ENCODE measurements at regions of chr11 and their contacts with region 1.

Region 1: DNA sequence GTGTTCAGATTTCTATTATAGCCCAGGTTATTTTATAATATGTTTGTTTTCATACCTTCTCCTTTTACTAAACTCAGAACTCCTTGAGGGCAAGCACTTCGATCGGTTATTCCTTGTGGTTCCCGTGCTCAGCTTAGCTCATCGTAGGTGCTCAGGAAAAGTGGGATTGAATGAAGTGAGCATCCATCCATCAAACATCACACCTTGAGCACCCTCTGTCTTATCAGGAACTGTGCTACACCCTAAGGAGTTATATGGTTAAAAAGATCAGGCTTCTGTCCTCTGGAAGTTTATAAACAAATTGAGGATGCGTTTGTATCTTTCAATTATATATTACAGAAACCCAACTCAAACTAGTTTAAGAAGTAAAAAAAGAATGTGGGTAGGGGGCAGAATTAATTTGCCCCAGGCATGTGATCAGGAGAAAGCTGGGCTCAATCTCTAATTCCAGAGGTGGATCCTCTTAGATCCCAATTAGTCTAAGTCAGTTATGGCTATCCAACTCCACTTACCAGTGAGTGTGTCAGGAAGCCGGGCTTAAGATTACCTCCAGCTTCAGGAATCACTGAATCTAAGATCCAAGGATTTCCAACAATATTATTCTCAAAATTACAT is 59.9 kb upstream of the RRAS2 start:
- DNase-seq: no peak
- H3K4me3 ChIP-seq: no peak overlapping the region
- H3K4me3 Mint-ChIP-seq: no peak overlapping the region
- H3K27ac ChIP-seq: no peak overlapping the region
- H3K27ac Mint-ChIP-seq: no peak overlapping the region
- H3K4me1 ChIP-seq: peaks cover 29% of the 10 kb centered on the region
- H3K4me1 Mint-ChIP-seq: peaks cover 19 to 33% (median 20%) of the 10 kb centered on the region in 4 donors
- H3K27me3 ChIP-seq: no peaks in the 10 kb centered on the region
- H3K27me3 Mint-ChIP-seq: no peaks in the 10 kb centered on the region

Region 2: DNA sequence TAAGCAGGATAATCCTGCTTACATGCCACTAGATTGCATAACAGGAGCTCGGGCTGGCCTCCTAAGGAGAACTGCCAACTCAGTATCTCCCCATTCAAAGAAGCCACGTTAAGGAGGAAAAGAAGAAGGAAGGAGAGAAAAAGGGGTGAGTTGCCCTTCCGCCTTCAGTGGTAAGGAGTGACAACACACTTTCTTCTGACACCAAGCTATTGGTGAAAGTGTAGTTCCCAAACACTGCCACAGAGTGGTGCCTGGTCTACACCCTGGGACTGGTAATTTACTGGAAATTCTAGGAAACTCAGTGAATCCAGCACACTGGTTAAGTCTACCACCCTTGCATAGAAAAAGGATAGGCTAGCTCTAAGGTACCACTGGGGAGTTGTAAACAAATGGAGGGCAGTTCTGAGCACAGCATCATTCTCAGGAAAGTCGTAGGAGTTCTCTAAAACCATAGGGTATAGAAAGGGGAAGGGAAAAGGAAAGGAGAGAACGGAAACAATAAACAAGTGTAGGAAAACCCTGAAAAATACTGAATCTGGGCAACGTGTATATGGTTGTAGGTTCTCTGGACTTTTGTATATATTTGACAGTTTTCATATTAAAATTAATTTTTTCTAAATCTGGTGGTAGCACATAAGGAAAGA is 118.1 kb before region 1 on chr11:
- CTCF ChIA-PET with region 1: interaction called, 10 read pairs
- POLR2A ChIA-PET with region 1: interaction called, 3 read pairs
- intact Hi-C with region 1: no loop called
- DNase-seq: peak in 4 of 5 donors; percentile 36 to 47 (median 44)
- H3K4me3 ChIP-seq: no peak overlapping the region
- H3K4me3 Mint-ChIP-seq: no peak overlapping the region
- H3K27ac ChIP-seq: no peak overlapping the region
- H3K27ac Mint-ChIP-seq: no peak overlapping the region
- H3K4me1 ChIP-seq: peaks cover 7% of the 10 kb centered on the region
- H3K4me1 Mint-ChIP-seq: peaks cover 0 to 10% (median 4%) of the 10 kb centered on the region in 4 donors
- H3K27me3 ChIP-seq: no peaks in the 10 kb centered on the region
- H3K27me3 Mint-ChIP-seq: no peaks in the 10 kb centered on the region

Region 3: DNA sequence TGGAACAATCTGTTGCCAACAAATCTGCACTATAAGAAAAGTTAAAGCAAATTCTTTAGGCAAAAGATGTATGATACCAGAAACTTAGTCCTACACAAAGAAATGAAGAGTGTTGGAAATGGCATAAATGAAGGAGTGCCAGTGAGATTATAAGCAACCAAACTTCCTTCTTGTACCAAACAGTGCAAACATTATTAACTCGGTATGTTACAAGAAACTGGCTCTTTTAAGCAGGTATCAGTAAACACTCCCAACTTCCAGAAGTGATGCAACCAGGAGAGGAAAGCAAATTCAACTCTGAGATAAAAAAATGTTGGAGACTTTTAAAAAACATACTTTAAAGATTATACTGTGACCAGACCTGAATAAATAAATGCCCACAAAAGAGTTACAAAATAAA is 52.2 kb after region 1 on chr11:
- CTCF ChIA-PET with region 1: no interaction called
- POLR2A ChIA-PET with region 1: no interaction called
- intact Hi-C with region 1: no loop called
- DNase-seq: no peak
- H3K4me3 ChIP-seq: no peak overlapping the region
- H3K4me3 Mint-ChIP-seq: peak overlapping the region in 1 of 8 donors; percentile 54
- H3K27ac ChIP-seq: no peak overlapping the region
- H3K27ac Mint-ChIP-seq: peak overlapping the region in 5 of 7 donors; percentile 25 to 77 (median 67)
- H3K4me1 ChIP-seq: peaks cover 19% of the 10 kb centered on the region
- H3K4me1 Mint-ChIP-seq: peaks cover 37 to 50% (median 41%) of the 10 kb centered on the region in 4 donors
- H3K27me3 ChIP-seq: no peaks in the 10 kb centered on the region
- H3K27me3 Mint-ChIP-seq: no peaks in the 10 kb centered on the region

Measured in CD4-positive, alpha-beta memory T cell (primary cell).